Naive thymus-derived CD4-positive, alpha-beta T cell (primary cell): ENCODE measurements at regions of chr16 and their contacts with region 1.

Region 1: DNA sequence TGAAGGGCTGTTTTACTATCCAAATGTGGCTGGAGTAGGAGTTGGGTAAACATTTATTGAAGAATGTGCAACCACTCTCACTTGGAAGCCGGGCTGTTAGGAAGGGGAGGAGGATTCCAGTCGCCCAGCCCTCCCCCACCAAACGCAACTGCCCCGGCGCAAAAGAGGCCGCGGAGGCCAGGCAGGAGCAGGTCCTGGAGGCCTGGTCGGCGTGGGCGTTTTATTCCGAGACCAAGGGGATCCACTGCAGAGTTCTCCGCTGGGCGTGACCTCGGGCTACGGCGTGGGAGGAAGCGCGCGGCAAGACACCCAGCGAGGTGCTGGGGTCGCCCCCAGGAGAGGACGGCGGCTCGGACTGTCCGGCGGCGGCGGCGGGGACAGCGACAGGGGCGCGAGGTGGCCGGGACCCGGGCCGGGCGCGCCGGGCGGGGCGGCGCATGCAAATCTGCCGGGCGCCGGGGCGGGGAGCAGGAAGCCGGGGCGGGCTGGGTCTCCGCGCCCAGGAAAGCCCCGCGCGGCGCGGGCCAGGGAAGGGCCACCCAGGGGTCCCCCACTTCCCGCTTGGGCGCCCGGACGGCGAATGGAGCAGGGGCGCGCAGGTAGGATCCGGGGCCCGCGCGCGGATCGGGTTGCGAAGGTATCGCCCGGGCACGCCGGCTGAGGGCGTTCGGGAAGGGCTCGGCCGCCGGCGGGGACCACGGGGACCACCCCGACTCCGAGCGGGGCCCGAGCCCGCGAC is at the start of gene IL4R:
- DNase-seq: peak; percentile 55 to 84 (median 68)
- ATAC-seq: peak; percentile 72
- H3K4me3 ChIP-seq: peak within 1 kb of the TSS; percentile 73
- H3K4me3 Mint-ChIP-seq: peak within 1 kb of the TSS; percentile 87 to 99 (median 97)
- H3K27ac ChIP-seq: peak within 1 kb of the TSS; percentile 99
- H3K27ac Mint-ChIP-seq: peak within 1 kb of the TSS; percentile 92 to 99 (median 96)
- H3K4me1 ChIP-seq: peaks cover 17 to 33% of the 10 kb centered on the region in 2 donors
- H3K4me1 Mint-ChIP-seq: peaks cover 29 to 52% (median 42%) of the 10 kb centered on the region in 7 donors
- H3K27me3 ChIP-seq: no peaks in the 10 kb centered on the region
- H3K27me3 Mint-ChIP-seq: peaks cover 0 to 3% (median 0%) of the 10 kb centered on the region in 5 donors
- total RNA-seq, gene IL4R: 158 to 498 (median 198) TPM

Region 2: DNA sequence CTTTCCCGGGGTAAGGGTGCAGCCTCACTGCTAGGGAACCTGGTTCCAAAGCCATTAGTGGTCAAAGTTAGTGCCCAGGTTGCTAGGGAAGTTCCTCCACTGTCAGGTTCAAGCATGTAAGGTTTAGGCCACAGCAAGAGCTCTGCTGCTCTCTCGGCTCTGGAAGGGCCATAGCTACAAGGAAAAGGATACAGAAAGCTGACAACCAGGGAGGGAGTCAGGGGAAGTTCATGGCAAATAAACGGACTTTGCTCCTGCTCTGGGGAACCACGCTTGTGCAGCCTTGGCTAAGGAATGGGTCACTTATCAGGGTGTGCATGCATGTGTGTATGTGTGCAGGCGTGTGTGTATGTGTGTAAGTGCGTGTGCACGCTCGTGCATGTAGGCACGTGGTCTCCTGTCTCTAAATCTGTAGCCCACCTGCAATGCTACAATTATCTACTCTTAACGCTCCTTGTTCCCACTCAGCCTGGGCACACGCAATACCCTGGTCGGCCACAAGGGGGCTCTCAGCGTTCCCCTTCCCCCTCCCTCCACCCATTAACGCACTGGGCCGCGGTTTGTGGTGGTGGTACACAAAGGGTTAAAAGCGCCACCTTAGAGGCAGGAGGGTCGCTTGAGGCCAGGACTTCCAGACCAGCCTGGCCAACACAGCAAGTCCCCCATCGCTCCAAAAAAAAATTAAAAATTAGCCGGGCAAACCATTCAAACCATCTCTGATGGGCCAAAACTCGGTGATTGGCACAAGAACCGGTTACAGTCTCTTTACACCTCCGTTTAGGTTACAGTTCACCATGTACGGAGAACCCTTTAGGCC is 158.7 kb before region 1 on chr16:
- CTCF ChIA-PET with region 1: interaction called, 4 read pairs
- POLR2A ChIA-PET with region 1: interaction called, 3 read pairs
- intact Hi-C with region 1: loop called in 1 of 2 experiments (anchors 5 kb)
- DNase-seq: peak; percentile 26 to 74 (median 56)
- ATAC-seq: peak; percentile 90
- H3K4me3 ChIP-seq: no peak overlapping the region
- H3K4me3 Mint-ChIP-seq: peak overlapping the region in 2 of 10 donors; percentile 3 to 16
- H3K27ac ChIP-seq: no peak overlapping the region
- H3K27ac Mint-ChIP-seq: peak overlapping the region in 7 of 9 donors; percentile 18 to 91 (median 61)
- H3K4me1 ChIP-seq: peaks cover 0 to 8% of the 10 kb centered on the region in 2 donors
- H3K4me1 Mint-ChIP-seq: peaks cover 6 to 28% (median 15%) of the 10 kb centered on the region in 7 donors
- H3K27me3 ChIP-seq: no peaks in the 10 kb centered on the region
- H3K27me3 Mint-ChIP-seq: no peaks in the 10 kb centered on the region

Region 3: DNA sequence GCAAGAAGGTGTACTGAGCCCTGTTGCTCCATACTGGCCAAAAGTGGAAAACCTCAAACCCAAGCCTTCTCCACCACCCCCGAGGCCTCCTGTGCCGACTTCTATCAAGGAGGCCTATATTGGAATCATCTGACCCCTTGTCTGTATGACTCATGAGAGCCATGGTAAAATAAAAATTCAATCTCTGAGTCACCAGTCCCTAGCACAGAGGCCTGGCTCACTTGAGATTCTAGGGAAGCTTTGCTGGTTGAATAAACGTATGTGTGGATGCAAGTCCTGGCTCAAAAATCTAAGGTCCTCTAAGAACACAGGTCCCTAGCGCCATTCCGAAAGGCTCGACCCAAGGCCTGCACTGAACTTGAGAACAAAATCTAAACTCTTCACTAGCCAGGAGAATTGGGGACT is 60.1 kb before region 1 on chr16:
- CTCF ChIA-PET with region 1: no interaction called
- POLR2A ChIA-PET with region 1: interaction called, 3 read pairs
- intact Hi-C with region 1: loop called in 1 of 2 experiments (anchors 5 kb)
- DNase-seq: peak in 1 of 9 donors; percentile 41
- ATAC-seq: no peak
- H3K4me3 ChIP-seq: peak overlapping the region; percentile 11
- H3K4me3 Mint-ChIP-seq: peak overlapping the region in 9 of 10 donors; percentile 54 to 76 (median 65)
- H3K27ac ChIP-seq: peak overlapping the region; percentile 47
- H3K27ac Mint-ChIP-seq: peak overlapping the region; percentile 49 to 95 (median 85)
- H3K4me1 ChIP-seq: peaks cover 4 to 31% of the 10 kb centered on the region in 2 donors
- H3K4me1 Mint-ChIP-seq: peaks cover 40 to 81% (median 77%) of the 10 kb centered on the region in 7 donors
- H3K27me3 ChIP-seq: no peaks in the 10 kb centered on the region
- H3K27me3 Mint-ChIP-seq: no peaks in the 10 kb centered on the region

Region 4: DNA sequence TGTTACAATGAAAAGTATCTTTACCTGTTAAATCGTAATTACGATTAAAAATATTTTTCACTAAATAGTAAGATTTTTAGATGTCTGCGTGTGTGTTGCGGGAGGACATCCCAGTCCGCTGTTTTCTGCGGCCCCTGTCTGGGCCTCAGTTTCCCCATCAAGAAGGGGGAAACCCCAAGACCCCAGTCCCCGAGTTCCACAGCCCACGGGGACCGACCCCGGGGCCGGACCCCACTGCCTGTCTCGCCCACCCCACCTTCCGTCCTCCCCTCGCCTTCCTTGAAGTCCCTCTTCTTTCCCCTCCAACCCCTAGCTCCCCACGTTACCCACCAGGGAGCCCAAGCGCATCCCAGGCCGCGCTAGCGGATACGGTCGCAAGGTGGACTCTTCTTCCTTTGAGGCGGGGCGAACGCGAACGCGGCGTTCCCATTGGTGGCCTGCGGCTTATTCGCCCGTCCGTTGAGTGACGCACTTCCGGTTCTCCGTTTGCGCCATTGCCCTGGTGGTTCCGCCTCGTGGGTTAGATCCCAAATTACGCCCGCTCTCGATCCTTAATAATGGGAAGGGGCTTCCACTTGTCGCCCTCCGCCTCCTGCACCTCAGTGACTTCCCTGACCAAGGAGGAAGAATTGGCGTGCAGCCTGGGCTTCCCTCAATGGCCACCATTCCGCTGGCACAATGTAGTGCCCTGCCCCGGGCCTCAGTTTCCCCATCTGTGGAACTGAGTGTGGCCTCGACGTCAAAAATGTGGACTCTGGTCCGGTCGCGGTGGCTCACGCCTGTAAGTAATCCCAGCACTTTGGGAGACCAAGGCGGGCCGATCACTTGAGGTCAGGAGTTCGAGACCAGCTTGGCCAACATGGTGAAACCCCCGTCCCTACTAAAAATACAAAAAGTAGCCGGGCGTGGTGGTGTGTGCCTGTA is 45.0 kb before region 1 on chr16 and contains the start of gene NSMCE1:
- CTCF ChIA-PET with region 1: interaction called, 3 read pairs
- POLR2A ChIA-PET with region 1: interaction called, 4 read pairs
- intact Hi-C with region 1: loop called in 1 of 2 experiments (anchors 1 kb)
- DNase-seq: peak; percentile 83 to 93 (median 92)
- ATAC-seq: peak; percentile 99
- H3K4me3 ChIP-seq: peak within 1 kb of the TSS; percentile 92
- H3K4me3 Mint-ChIP-seq: peak within 1 kb of the TSS; percentile 92 to 99 (median 96)
- H3K27ac ChIP-seq: peak within 1 kb of the TSS; percentile 87
- H3K27ac Mint-ChIP-seq: peak within 1 kb of the TSS; percentile 94 to 99 (median 99)
- H3K4me1 ChIP-seq: peaks cover 15 to 36% of the 10 kb centered on the region in 2 donors
- H3K4me1 Mint-ChIP-seq: peaks cover 41 to 95% (median 74%) of the 10 kb centered on the region in 7 donors
- H3K27me3 ChIP-seq: no peaks in the 10 kb centered on the region
- H3K27me3 Mint-ChIP-seq: no peaks in the 10 kb centered on the region
- total RNA-seq, gene NSMCE1: 45.5 to 106 (median 70.2) TPM

Region 5: DNA sequence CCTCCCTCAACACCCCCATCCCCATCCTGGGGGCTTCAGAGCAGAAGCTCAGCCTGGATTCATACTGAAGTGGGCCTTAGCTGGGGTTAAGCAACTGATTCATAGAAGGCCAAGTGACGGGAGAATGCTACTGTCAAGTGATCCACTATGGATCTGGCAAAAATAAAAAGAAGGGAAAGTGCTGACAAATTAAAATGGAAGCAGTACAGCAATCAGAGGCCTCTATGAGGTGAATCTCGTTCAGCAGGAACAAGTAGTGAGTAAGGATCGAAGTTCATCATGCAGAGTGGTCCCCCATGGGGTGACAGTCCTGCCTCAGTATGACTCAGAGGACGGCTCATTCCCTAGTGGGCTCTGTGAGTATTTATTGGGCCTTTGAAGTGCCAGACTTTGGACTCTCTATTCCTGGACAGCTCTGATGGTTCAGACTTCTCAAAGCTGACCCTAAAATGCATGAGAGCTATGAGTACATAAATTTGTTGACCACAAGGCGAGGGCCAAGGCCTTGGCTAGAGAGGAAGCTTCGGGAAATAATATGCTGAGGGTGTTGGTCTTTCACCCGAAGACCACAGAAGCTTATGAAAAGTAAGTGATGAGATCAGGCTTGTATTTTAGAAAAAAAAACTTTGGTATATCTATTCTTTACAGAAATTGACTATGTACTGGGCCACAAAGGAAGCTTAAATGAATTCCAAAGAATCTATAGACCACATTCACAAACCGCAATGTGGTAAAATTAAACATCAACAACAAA is 39.7 kb before region 1 on chr16:
- CTCF ChIA-PET with region 1: interaction called, 3 read pairs
- POLR2A ChIA-PET with region 1: interaction called, 4 read pairs
- intact Hi-C with region 1: loop called (anchors 1 to 2 kb)
- DNase-seq: peak in 7 of 9 donors; percentile 44 to 75 (median 56)
- ATAC-seq: peak; percentile 79
- H3K4me3 ChIP-seq: peak overlapping the region; percentile 15
- H3K4me3 Mint-ChIP-seq: peak overlapping the region; percentile 49 to 88 (median 74)
- H3K27ac ChIP-seq: peak overlapping the region; percentile 63
- H3K27ac Mint-ChIP-seq: peak overlapping the region; percentile 48 to 95 (median 88)
- H3K4me1 ChIP-seq: peaks cover 9 to 30% of the 10 kb centered on the region in 2 donors
- H3K4me1 Mint-ChIP-seq: peaks cover 25 to 77% (median 65%) of the 10 kb centered on the region in 7 donors
- H3K27me3 ChIP-seq: no peaks in the 10 kb centered on the region
- H3K27me3 Mint-ChIP-seq: peaks cover 0 to 4% (median 0%) of the 10 kb centered on the region in 5 donors

Region 6: DNA sequence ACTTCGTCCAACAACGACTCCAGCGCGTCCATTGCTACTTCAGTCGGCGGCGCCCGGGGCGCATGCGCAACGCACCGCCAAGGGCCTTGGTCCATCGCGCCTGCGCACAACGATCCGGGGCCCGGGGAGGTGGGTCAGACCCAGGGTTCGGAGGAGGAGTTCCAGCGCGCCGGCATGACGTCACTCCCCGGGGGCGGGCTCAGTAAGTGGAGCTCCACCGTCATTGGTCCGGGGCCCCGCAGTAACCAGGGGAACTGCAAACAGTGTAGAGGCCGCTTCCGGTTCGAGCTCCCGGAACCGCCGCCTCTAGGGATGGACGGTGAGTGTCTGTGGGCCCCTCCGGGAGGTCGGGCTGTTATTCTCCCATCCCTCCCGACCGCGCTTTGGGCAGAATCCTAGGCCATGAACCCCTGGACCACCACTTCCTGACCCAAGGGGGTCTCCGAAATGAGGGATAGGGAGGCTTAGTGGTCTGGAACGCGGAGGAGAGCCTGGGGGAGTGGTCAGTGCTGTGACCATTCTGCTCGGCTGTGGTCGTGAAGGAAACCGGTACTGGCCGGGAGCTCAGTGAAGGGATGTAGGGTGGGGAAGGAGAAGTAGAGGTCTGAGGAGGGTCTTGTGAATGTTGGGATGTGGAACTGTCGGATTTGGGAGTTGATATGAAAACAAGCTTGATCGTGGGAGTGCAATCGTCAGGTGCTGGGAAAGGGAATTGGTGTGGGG is 236.4 kb after region 1 on chr16 and contains the starts of genes GTF3C1 and KATNIP:
- CTCF ChIA-PET with region 1: no interaction called
- POLR2A ChIA-PET with region 1: no interaction called
- intact Hi-C with region 1: loop called in 1 of 2 experiments (anchors 2 kb)
- DNase-seq: peak; percentile 100
- ATAC-seq: peak; percentile 100
- H3K4me3 ChIP-seq: peak within 1 kb of the TSS; percentile 100
- H3K4me3 Mint-ChIP-seq: peak within 1 kb of the TSS; percentile 95 to 98 (median 97)
- H3K27ac ChIP-seq: peak within 1 kb of the TSS; percentile 85
- H3K27ac Mint-ChIP-seq: peak within 1 kb of the TSS; percentile 94 to 99 (median 98)
- H3K4me1 ChIP-seq: peaks cover 21 to 22% of the 10 kb centered on the region in 2 donors
- H3K4me1 Mint-ChIP-seq: peaks cover 26 to 51% (median 44%) of the 10 kb centered on the region in 7 donors
- H3K27me3 ChIP-seq: no peaks in the 10 kb centered on the region
- H3K27me3 Mint-ChIP-seq: peaks cover 0 to 2% (median 0%) of the 10 kb centered on the region in 5 donors
- total RNA-seq, gene GTF3C1: 51.8 to 60.0 (median 52.6) TPM
- total RNA-seq, gene KATNIP: 18.7 to 39.0 (median 21.3) TPM